ENCODE measurements at regions of chr14 and their contacts with region 1.

Region 1: GRCh38 chr14:21498553-21499526 is 12.3 kb downstream of the METTL3 start:
- DNase-seq: peak; percentile 80
- H3K4me3 ChIP-seq: no peak overlapping the region
- H3K27ac ChIP-seq: no peak overlapping the region
- H3K4me1 ChIP-seq: no peaks in the 10 kb centered on the region
- CTCF ChIP-seq: peak; percentile 89

Region 2: DNA sequence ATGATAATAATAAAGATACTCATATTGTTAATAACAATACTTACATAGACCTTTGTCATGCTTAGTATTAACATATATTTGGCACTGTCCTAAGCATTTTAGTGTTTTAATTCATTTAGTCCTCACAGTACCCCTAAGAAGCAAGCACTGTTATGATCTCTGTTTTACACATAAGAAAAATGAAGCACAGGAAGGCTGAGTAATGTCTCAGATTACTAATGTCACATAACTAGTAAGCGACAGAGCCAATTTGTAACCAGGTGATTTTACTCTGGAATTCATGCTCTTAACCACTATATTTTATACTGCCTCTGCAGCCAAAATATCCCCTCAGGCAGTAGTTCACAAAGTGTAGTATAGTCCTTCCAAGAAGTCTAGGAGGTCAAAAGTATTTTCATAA is 377.7 kb before region 1 on chr14:
- CTCF ChIA-PET with region 1: no interaction called
- POLR2A ChIA-PET with region 1: no interaction called
- intact Hi-C with region 1: no loop called
- DNase-seq: no peak
- H3K4me3 ChIP-seq: no peak overlapping the region
- H3K27ac ChIP-seq: no peak overlapping the region
- H3K4me1 ChIP-seq: no peaks in the 10 kb centered on the region
- CTCF ChIP-seq: no peak

Region 3: GRCh38 chr14:21510735-21511657 is 12.2 kb after region 1 on chr14 and contains the start of gene METTL3:
- CTCF ChIA-PET with region 1: interaction called, 4 read pairs
- POLR2A ChIA-PET with region 1: interaction called, 13 read pairs
- intact Hi-C with region 1: no loop called
- DNase-seq: peak; percentile 98
- H3K4me3 ChIP-seq: peak within 1 kb of the TSS; percentile 78
- H3K27ac ChIP-seq: peak within 1 kb of the TSS; percentile 34
- H3K4me1 ChIP-seq: peaks cover 13% of the 10 kb centered on the region
- CTCF ChIP-seq: no peak
- total RNA-seq, gene METTL3: 118 and 145 TPM in 2 replicates

Region 4: DNA sequence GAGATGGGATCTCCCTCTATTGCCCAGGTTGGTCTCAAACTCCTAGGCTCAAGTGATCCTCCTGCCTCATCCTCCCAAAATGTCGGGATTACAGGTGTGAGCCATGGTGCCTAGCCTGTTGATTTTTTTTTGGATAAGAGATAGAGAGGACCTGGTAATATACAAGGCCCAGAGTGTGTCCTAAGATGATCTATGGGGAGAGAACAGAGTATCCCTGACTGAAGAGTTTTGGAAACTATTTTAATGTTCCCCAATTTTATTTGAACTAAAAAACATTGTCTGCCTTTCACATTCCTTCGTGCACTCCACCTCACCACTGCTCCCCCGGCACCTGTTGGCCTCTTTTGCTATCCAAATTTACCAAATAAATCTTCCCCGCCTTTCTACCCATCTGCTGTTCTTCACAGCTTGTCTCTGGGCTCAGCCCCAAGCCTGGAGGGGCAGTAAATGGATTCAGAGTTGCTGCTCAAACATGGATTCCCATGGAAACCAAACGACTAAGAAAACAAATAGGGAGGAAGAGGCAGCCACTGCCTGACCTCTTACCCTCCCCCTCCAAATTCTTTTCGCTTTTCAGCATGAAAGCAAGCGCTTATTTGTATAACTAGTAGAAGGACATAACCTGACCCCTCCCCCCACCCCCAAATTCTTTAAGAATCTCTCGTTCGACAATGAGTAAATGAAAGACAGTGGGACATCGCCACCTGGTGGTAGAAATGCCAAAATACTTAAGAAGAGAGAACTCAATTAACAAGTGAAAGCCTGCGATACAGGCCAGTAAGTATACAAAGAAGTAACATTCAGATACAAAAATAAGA is 58.5 kb after region 1 on chr14:
- CTCF ChIA-PET with region 1: interaction called, 5 read pairs
- POLR2A ChIA-PET with region 1: interaction called, 16 read pairs
- intact Hi-C with region 1: loop called (anchors 1 kb)
- DNase-seq: peak; percentile 90
- H3K4me3 ChIP-seq: peak overlapping the region; percentile 36
- H3K27ac ChIP-seq: no peak overlapping the region
- H3K4me1 ChIP-seq: peaks cover 6% of the 10 kb centered on the region
- CTCF ChIP-seq: peak; percentile 94

Measured in OCI-LY7 (cell line).